ENCODE measurements at regions of chr1 and their contacts with region 1.

Region 1: GRCh38 chr1:205977402-205978014 is 25.7 kb downstream of the RAB7B start:
- DNase-seq: peak; percentile 83 to 93
- ATAC-seq: peak; percentile 87
- H3K4me3 ChIP-seq: no peak overlapping the region
- H3K27ac ChIP-seq: no peak overlapping the region
- H3K4me1 ChIP-seq: no peaks in the 10 kb centered on the region
- H3K27me3 ChIP-seq: no peaks in the 10 kb centered on the region

Region 2: GRCh38 chr1:205668951-205669340 is 308.6 kb before region 1 on chr1:
- intact Hi-C with region 1: loop called (anchors 5 to 10 kb)
- DNase-seq: no peak
- ATAC-seq: no peak
- H3K4me3 ChIP-seq: no peak overlapping the region
- H3K27ac ChIP-seq: no peak overlapping the region
- H3K4me1 ChIP-seq: peaks cover 0 to 4% of the 10 kb centered on the region in 2 donors
- H3K27me3 ChIP-seq: no peaks in the 10 kb centered on the region

Region 3: DNA sequence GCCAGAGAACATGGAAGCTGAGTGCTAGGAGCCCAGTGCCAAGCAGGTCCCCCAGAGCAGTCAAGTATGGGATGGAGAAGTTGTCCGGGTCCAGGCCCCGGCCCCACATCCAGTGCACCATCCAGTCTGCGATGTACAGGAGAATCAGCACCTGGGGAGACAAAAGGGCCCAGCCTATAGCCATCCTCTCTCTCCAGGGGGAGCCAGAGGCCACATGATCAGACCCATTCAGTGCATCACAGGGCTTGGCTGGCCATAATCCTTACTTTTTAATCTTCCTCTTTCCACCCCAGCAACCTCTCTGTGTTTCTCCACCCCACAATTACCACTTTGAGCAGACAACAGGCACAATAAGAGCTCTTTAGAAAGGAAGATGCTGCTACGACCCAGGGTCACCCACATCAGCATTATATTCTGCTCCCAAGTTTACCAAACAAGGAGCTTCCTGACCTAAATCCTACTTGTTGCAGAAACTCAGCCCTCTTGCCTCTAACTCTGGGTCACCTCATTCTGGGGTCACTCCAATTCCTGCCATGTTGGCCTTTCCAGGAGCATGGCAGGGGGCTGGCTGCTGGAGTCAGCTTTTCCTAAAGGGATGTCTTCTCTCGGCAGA is 185.8 kb before region 1 on chr1:
- intact Hi-C with region 1: loop called (anchors 1 to 2 kb)
- DNase-seq: peak; percentile 71 to 80
- ATAC-seq: peak; percentile 87
- H3K4me3 ChIP-seq: no peak overlapping the region
- H3K27ac ChIP-seq: no peak overlapping the region
- H3K4me1 ChIP-seq: no peaks in the 10 kb centered on the region
- H3K27me3 ChIP-seq: no peaks in the 10 kb centered on the region

Region 4: DNA sequence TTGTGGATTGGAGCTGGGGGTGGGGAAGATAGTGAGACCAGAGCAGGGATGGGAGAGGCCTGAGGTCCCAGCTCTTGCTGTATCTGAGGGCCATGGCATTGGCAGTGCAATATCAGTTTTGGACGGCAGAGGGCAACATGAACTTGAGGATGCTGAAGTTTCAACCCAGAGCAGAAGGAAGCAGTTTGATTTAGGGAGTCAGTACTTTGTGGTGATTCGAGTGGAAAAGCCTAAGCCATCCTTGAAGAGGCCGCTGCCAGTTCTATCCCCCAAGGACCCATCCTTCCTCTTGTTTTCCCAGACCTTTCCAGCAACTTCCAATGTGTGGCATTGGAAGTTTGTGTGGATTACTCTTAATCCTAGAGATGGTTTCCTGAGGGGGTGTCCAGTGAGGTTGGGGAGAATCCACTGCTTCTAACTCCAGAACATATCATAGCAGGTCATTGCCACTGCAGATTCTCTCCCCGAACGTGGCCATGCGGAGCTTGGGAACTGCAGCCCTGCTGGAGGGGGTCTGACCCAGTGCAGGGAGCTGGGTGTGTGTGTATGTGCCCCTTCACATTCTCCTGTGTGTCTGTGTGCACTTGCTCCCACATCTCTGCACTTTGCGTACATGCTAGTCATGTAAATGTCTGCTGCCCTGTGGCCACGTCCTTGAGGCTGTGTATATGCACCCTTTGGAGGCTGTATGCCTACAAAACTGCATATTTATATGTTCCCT is 58.3 kb before region 1 on chr1:
- intact Hi-C with region 1: loop called (anchors 1 kb)
- DNase-seq: peak; percentile 89 to 90
- ATAC-seq: peak; percentile 84
- H3K4me3 ChIP-seq: no peak overlapping the region
- H3K27ac ChIP-seq: peak overlapping the region; percentile 14 to 35
- H3K4me1 ChIP-seq: peaks cover 3 to 9% of the 10 kb centered on the region in 2 donors
- H3K27me3 ChIP-seq: no peaks in the 10 kb centered on the region

Region 5: DNA sequence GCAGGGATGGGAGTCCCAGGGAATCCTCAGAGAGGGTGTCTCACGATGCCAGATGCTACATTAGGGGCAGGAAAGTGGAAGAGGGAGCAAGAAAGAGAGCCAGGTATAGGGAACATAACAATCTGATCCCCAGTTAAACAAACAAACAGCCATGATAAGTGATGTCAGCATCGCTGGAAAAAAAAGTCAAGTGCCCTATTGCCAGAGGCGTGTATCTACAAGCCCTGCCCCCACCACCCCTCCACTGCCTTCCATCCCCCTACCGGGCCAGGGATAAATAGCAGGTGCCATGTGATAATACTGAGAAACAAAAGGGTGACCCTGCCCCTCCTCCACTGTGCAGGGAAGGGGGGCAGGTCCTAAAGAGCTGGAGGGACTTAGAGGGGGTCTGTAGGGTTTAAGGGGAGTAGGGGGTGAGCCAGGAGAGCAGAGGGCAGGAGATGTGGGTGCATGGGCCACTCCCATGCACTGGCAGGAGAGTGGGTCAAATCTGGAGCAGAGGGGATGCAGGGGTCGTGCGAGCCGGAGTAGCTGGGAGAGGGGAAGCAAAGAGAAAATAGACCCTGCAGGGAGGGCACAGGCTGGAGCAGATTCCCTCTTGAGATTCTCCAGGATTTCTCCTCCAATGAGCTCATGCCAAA is 37.7 kb before region 1 on chr1:
- intact Hi-C with region 1: loop called in 1 of 2 experiments (anchors 5 kb)
- DNase-seq: no peak
- ATAC-seq: no peak
- H3K4me3 ChIP-seq: no peak overlapping the region
- H3K27ac ChIP-seq: no peak overlapping the region
- H3K4me1 ChIP-seq: no peaks in the 10 kb centered on the region
- H3K27me3 ChIP-seq: no peaks in the 10 kb centered on the region

Region 6: DNA sequence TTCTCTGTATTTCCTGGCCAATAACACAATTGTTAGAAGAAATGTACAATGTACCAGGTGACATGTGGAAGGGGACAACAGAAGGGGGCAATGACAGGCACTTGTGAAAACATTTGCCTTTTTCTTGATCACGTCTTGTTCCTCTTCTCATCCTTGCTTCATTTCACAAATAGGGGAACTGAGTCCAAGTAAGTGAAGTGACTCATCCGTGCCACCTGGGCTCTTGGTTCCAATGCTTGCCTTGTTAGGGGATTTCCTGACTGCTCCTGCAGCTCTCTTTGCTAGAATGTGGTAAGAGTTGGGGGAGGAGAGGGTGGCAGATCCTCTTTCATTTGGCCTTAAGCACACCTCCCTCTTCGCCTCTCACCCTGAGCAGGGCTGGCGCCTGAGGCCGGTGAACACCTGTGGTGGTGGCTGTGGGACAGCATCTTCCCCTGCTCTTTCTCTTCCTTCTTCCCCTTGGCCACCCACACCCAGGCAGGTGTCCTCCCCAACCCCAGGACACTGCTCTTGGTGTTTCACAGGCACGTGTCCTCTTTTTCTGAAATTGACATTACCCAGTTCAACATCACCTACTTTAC is 73.2 kb after region 1 on chr1:
- intact Hi-C with region 1: no loop called
- DNase-seq: peak in 1 of 2 donors; percentile 59
- ATAC-seq: no peak
- H3K4me3 ChIP-seq: no peak overlapping the region
- H3K27ac ChIP-seq: no peak overlapping the region
- H3K4me1 ChIP-seq: no peaks in the 10 kb centered on the region
- H3K27me3 ChIP-seq: no peaks in the 10 kb centered on the region

Measured in aorta (tissue), 5 donors.